Ascending aorta (tissue), 2 donors: ENCODE measurements at regions of chrX and their contacts with region 1.

Region 1: DNA sequence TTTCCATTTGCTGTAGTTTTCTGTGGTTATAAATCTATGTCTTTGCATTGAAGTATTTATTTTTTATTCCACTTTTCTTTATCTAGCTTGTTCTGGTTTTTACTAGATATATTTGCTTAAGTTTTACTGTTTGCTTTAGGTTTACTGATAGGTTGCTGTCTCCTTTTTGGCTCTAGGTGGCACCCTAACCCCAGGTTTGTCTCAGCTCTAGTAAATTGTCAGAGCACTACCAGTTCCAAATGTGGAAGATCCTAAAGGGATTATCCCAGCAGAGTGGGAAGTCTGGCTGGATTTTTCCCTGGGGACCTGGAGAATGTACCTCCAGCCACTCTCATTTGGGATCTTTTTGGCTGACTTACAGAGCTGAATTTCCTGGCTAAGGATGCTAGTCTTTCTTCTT is 106.1 kb downstream of the PBDC1 start:
- DNase-seq: no peak
- H3K4me3 ChIP-seq: no peak overlapping the region
- H3K27ac ChIP-seq: no peak overlapping the region
- H3K4me1 ChIP-seq: no peaks in the 10 kb centered on the region
- H3K27me3 ChIP-seq: no peaks in the 10 kb centered on the region
- CTCF ChIP-seq: peak; percentile 32 to 60 (median 59)

Region 2: GRCh38 chrX:75883446-75883845 is 395.6 kb before region 1 on chrX:
- intact Hi-C with region 1: no loop called
- DNase-seq: no peak
- H3K4me3 ChIP-seq: no peak overlapping the region
- H3K27ac ChIP-seq: no peak overlapping the region
- H3K4me1 ChIP-seq: no peaks in the 10 kb centered on the region
- H3K27me3 ChIP-seq: no peaks in the 10 kb centered on the region
- CTCF ChIP-seq: no peak

Region 3: DNA sequence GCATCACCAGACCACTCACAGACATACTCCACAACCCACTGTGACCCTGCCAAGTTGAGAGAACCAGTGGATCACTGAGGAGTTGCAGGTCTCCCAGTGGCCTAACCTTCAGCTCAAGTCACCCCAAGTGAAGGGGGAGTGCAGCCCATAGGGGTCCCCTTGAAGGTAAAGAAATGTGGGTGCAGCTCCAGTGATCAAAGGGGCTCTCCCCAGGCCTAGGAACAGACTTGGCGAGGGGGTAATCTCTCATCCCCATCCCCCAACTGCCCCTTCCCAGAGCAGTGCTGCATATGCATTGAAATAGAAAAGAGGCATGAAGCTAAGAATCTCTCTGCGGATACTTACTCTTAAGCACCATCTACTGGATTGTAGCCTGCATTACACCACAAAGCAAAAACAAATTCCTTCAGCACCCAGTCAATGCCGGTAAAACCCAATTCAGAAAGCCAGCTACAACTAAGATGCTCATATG is 175.5 kb after region 1 on chrX:
- intact Hi-C with region 1: loop called (anchors 5 kb)
- DNase-seq: no peak
- H3K4me3 ChIP-seq: no peak overlapping the region
- H3K27ac ChIP-seq: no peak overlapping the region
- H3K4me1 ChIP-seq: no peaks in the 10 kb centered on the region
- H3K27me3 ChIP-seq: no peaks in the 10 kb centered on the region
- CTCF ChIP-seq: peak in 2 of 3 experiments; percentile 29 to 42